MCF 10A (cell line): ENCODE measurements at regions of chr10 and their contacts with region 1.

Region 1: GRCh38 chr10:88042160-88043100 is 179.0 kb downstream of the PTEN start:
- DNase-seq: peak; percentile 92
- H3K4me3 Mint-ChIP-seq: peak overlapping the region; percentile 56
- H3K27ac Mint-ChIP-seq: peak overlapping the region; percentile 95
- H3K4me1 Mint-ChIP-seq: peaks cover 20% of the 10 kb centered on the region
- H3K27me3 Mint-ChIP-seq: no peaks in the 10 kb centered on the region
- CTCF ChIP-seq: no peak

Region 2: DNA sequence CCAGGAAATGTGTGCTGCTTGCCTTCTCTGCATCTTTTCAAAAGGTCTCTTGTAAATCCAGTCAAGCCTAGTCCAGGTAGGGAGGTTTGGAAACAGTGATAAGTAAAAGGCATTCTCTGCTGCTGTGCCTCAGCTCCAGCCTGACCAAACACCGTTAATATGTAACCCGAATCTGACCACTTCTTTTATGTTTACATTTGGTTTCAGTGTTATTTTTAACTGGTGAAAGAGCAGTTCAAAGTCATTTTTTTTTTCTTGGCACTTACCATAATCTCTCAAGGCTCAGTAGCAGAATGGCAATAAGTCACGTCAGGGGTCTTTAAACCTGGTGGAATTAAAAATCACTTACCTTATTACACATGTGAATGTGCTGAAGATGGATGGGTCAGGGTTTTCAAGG is 37.8 kb after region 1 on chr10:
- CTCF ChIA-PET with region 1: interaction called, 3 read pairs
- POLR2A ChIA-PET with region 1: interaction called, 16 read pairs
- intact Hi-C with region 1: no loop called
- DNase-seq: peak; percentile 28
- H3K4me3 Mint-ChIP-seq: no peak overlapping the region
- H3K27ac Mint-ChIP-seq: peak overlapping the region; percentile 51
- H3K4me1 Mint-ChIP-seq: peaks cover 28% of the 10 kb centered on the region
- H3K27me3 Mint-ChIP-seq: no peaks in the 10 kb centered on the region
- CTCF ChIP-seq: no peak

Region 3: DNA sequence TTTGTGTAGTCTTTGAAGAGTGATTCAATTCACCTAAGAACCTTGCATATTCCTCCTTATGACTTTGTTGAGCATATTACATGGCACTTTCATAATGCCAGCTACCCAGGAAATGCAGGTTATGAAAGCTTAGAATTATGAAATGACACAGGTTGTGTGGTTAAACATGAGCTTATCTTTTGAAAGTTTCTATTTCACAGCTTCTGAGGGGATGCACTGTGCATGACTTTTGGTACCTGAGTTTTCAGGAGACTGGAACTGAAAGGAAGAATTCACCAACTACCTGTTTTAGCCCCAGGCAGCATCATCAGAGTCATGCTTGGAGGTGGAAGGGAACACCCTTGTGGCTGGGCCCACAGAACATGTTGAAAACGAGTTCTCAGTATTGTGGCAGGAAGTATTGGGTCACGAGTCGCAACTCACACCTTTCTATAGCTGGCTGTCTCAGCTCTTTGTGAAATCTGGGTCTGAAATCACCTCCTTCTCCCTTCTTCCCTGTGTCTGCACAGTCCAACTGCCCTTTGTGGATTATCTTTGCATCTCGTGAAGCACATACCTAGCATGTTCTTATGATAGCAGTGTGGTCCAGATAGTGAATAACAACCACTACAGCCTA is 49.2 kb after region 1 on chr10:
- CTCF ChIA-PET with region 1: interaction called, 3 read pairs
- POLR2A ChIA-PET with region 1: interaction called, 24 read pairs
- intact Hi-C with region 1: no loop called
- DNase-seq: peak; percentile 80
- H3K4me3 Mint-ChIP-seq: no peak overlapping the region
- H3K27ac Mint-ChIP-seq: peak overlapping the region; percentile 63
- H3K4me1 Mint-ChIP-seq: peaks cover 66% of the 10 kb centered on the region
- H3K27me3 Mint-ChIP-seq: no peaks in the 10 kb centered on the region
- CTCF ChIP-seq: no peak

Region 4: GRCh38 chr10:88131511-88132154 is 89.2 kb after region 1 on chr10:
- CTCF ChIA-PET with region 1: no interaction called
- POLR2A ChIA-PET with region 1: no interaction called
- intact Hi-C with region 1: no loop called
- DNase-seq: peak; percentile 98
- H3K4me3 Mint-ChIP-seq: peak overlapping the region; percentile 66
- H3K27ac Mint-ChIP-seq: peak overlapping the region; percentile 50
- H3K4me1 Mint-ChIP-seq: peaks cover 27% of the 10 kb centered on the region
- H3K27me3 Mint-ChIP-seq: no peaks in the 10 kb centered on the region
- CTCF ChIP-seq: peak; percentile 19